Activated T-helper 2 cell treated with anti-CD3 and anti-CD28 coated beads, Interferon-gamma antibody, Interleukin-2, Interleukin-4, amounts not matched to agents 10 μg/mL and 5 μg/mL and 100 μg/mL, durations not matched to agents 14 hours and 24 hours and 36 hours (primary cell): ENCODE measurements at regions of chr1 and their contacts with region 1.

Region 1: GRCh38 chr1:70440642-70441378 is 29.7 kb downstream of the CTH start:
- DNase-seq: no peak
- H3K4me3 Mint-ChIP-seq: no peak overlapping the region
- H3K27ac Mint-ChIP-seq: peak overlapping the region; percentile 26
- H3K4me1 Mint-ChIP-seq: peaks cover 24% of the 10 kb centered on the region
- H3K27me3 Mint-ChIP-seq: no peaks in the 10 kb centered on the region

Region 2: GRCh38 chr1:70288166-70288565 is 152.6 kb before region 1 on chr1:
- intact Hi-C with region 1: no loop called
- DNase-seq: no peak
- H3K4me3 Mint-ChIP-seq: no peak overlapping the region
- H3K27ac Mint-ChIP-seq: no peak overlapping the region
- H3K4me1 Mint-ChIP-seq: no peaks in the 10 kb centered on the region
- H3K27me3 Mint-ChIP-seq: no peaks in the 10 kb centered on the region

Region 3: DNA sequence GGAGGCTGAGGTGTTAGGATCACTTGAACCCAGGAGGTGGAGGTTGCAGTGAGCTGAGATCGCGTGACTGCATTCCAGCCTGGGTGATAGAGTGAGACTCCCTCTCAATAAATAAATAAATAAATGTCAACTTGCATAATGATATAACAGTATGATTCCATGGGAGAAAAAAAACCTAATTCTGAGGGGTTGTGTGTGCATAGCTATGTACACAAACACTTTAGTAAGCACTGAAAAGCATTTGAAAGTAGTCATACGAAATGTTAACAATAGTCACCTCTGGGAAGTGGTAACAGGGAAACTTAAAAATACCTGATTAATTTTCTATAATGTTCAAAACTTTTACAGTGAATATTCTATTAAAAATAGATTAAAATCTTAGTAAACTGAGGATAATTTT is 129.4 kb before region 1 on chr1:
- intact Hi-C with region 1: no loop called
- DNase-seq: no peak
- H3K4me3 Mint-ChIP-seq: no peak overlapping the region
- H3K27ac Mint-ChIP-seq: no peak overlapping the region
- H3K4me1 Mint-ChIP-seq: peaks cover 3% of the 10 kb centered on the region
- H3K27me3 Mint-ChIP-seq: no peaks in the 10 kb centered on the region

Region 4: DNA sequence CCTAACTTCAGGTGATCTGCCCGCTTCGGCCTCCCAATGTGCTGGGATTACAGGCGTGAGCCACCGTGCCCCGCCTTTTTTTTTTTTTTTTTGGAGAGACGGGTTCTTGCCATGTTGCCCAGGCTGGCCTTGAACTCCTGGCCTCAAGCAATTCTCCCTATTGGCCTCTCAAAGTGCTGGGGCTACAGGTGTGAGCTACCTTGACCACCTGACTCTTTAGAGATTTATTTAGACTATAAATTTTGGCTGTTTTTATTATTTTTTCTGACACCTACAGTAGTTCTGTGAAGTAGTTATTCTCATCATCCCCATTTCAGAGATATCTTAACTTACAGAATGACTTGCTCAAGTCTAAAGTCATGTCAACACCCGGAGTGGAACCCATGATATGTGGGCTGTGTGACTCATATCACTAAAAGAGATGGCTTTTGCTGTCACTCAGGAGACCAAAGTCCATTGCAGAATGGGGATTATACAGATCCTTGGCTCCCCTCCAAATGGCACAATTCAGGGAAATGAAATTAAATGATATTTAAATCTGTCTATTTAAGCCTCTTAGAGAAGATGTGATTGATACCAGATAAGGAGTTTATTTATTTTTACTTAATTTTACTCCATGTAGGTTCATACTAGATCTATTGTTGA is 63.5 kb after region 1 on chr1:
- intact Hi-C with region 1: loop called (anchors 5 kb)
- DNase-seq: no peak
- H3K4me3 Mint-ChIP-seq: no peak overlapping the region
- H3K27ac Mint-ChIP-seq: peak overlapping the region; percentile 30
- H3K4me1 Mint-ChIP-seq: peaks cover 14% of the 10 kb centered on the region
- H3K27me3 Mint-ChIP-seq: no peaks in the 10 kb centered on the region